MCF 10A (cell line): ENCODE measurements at regions of chr17 and their contacts with region 1.

Region 1: GRCh38 chr17:78144147-78144719 is 2.0 kb upstream of the C17orf99 start:
- DNase-seq: peak; percentile 70
- H3K4me3 Mint-ChIP-seq: no peak overlapping the region
- H3K27ac Mint-ChIP-seq: no peak overlapping the region
- H3K4me1 Mint-ChIP-seq: peaks cover 16% of the 10 kb centered on the region
- H3K27me3 Mint-ChIP-seq: no peaks in the 10 kb centered on the region
- CTCF ChIP-seq: no peak

Region 2: DNA sequence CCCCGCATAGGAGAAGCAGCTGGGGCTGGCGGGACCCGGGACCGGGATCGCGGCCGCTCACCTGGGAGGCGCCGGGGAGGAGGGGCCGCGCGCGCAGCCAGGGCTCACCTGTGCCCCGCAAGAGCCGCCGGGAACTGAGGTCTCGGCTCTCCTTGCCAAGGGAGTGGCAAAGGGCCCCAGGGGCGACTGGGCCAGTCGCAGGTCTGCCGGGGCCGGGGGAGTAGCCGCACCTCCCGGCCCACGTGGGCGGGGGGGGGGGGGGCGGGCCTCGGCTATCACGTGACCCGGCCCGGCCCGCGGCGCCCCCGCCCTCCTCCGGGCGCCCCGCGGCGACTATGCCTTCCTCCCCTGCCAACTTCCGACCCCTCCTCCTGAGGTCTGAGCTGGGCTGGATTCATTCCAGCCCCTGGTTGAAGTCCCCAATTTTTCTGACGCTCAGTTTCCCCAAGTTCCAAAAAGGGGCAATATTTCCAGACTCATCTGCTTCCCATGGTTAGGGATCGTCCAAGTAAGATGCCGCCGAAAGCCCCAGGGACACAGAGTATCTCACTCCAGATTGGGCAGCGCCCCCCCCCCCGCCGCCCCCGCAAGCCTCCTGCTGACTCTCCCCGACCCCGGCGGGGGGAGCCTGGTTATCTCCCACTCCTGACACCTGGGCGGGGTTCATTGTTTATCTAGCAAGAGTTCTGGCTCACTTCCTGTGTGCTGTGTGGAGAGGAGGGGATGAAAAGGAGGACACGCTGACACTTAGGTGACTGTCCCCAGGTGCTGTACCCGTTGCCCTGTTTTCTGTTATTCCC is 15.5 kb before region 1 on chr17 and contains the start of gene TMC6:
- CTCF ChIA-PET with region 1: interaction called, 5 read pairs
- POLR2A ChIA-PET with region 1: interaction called, 14 read pairs
- intact Hi-C with region 1: no loop called
- DNase-seq: peak; percentile 56
- H3K4me3 Mint-ChIP-seq: peak within 1 kb of the TSS; percentile 77
- H3K27ac Mint-ChIP-seq: no peak within 1 kb of the TSS
- H3K4me1 Mint-ChIP-seq: no peaks in the 10 kb centered on the region
- H3K27me3 Mint-ChIP-seq: peaks cover 5% of the 10 kb centered on the region
- CTCF ChIP-seq: no peak
- total RNA-seq, gene TMC6: 3.1 and 7.3 TPM in 2 replicates

Region 3: DNA sequence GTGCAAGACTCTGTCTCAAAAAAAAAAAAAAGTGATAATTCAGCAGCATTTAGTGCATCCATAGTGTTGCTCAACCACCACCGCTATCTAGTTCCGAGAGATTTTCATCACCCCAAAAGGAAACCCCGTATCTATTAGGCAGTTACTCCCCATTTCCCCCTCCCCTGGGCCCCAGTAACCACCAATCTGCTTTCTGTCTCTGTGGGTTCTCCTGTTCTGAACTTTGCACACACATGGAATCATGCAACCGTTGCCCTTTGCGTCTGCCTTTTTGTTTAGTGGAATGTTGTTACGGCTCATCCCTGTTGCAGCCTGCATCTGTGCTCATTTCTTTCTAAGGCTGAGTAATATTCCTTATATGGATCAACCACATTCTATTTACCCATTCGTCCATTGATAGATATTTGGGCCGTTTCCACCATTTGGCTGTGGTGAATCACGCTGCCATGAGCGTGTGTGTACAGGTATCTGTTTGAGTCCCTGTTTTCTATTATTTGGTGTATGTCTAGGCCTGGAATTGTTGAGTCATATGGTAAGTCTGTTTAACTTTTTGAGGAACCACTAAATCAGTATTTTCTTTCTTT is 15.4 kb after region 1 on chr17:
- CTCF ChIA-PET with region 1: interaction called, 3 read pairs
- POLR2A ChIA-PET with region 1: interaction called, 5 read pairs
- intact Hi-C with region 1: loop called (anchors 1 kb)
- DNase-seq: peak; percentile 88
- H3K4me3 Mint-ChIP-seq: peak overlapping the region; percentile 23
- H3K27ac Mint-ChIP-seq: peak overlapping the region; percentile 65
- H3K4me1 Mint-ChIP-seq: peaks cover 9% of the 10 kb centered on the region
- H3K27me3 Mint-ChIP-seq: no peaks in the 10 kb centered on the region
- CTCF ChIP-seq: no peak

Region 4: DNA sequence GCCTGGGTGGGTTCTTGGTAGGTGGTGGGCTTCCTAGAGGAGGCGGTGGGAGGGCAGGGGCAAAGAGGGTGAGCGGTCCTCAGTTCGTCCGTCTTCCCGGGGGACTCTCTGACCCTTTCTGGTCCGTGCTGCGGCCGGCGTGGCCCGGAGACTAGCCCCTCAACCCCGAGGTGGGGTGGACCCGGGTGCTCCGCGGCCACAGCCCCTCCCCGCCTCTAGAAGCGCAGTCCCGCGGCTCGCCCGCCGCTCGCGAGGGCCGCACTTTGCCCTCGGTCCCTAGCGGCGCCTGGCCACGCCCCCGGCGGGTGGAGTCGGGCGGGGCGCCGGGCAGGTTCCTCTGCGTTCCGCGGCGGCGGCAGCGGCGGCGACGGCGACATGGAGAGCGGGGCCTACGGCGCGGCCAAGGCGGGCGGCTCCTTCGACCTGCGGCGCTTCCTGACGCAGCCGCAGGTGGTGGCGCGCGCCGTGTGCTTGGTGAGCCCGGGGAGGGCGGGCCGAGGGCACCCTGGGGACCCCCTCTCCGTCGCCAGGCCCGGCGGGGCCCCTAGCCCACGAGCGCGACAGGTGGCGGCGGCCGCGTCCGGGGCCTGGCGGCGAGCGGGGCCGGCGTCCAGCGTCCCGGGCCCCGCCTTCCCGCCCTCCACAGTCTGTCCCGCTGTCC is 24.1 kb after region 1 on chr17 and contains the start of gene SYNGR2:
- CTCF ChIA-PET with region 1: interaction called, 3 read pairs
- POLR2A ChIA-PET with region 1: interaction called, 12 read pairs
- intact Hi-C with region 1: no loop called
- DNase-seq: peak; percentile 72
- H3K4me3 Mint-ChIP-seq: peak within 1 kb of the TSS; percentile 65
- H3K27ac Mint-ChIP-seq: peak within 1 kb of the TSS; percentile 39
- H3K4me1 Mint-ChIP-seq: no peaks in the 10 kb centered on the region
- H3K27me3 Mint-ChIP-seq: no peaks in the 10 kb centered on the region
- CTCF ChIP-seq: no peak
- total RNA-seq, gene SYNGR2: 52.2 and 54.2 TPM in 2 replicates